Sigmoid colon (tissue), 7 donors: ENCODE measurements at regions of chr17 and their contacts with region 1.

Region 1: GRCh38 chr17:2688351-2689342 is 22.9 kb downstream of the CLUH start:
- DNase-seq: peak; percentile 72
- H3K4me3 ChIP-seq: no peak overlapping the region
- H3K27ac ChIP-seq: peak overlapping the region; percentile 36 to 72 (median 66)
- H3K4me1 ChIP-seq: peaks cover 0 to 51% (median 40%) of the 10 kb centered on the region in 4 donors
- H3K27me3 ChIP-seq: no peaks in the 10 kb centered on the region
- CTCF ChIP-seq: no peak
- EP300 ChIP-seq: no peak
- POLR2A ChIP-seq: no peak

Region 2: DNA sequence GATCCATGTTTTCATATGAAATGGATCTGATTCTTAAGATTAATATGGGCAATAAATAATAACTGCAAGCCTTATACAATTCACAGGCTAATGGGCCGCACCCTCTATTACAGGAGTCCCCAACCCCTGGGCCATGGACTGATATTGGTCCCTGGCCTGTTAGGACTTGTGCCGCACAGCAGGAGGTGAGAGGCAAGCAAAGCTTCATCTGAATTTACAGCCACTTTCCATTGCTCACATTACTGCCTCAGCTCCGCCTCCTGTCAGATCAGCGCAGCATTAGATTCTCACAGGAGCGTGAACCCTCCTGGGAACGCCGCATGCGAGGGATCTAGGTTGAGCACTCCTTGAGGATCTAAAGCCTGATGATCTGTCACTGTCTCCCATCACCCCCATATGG is 203.8 kb before region 1 on chr17:
- intact Hi-C with region 1: loop called (anchors 10 kb)
- DNase-seq: no peak
- H3K4me3 ChIP-seq: no peak overlapping the region
- H3K27ac ChIP-seq: no peak overlapping the region
- H3K4me1 ChIP-seq: peaks cover 0 to 40% (median 32%) of the 10 kb centered on the region in 4 donors
- H3K27me3 ChIP-seq: no peaks in the 10 kb centered on the region
- CTCF ChIP-seq: no peak
- EP300 ChIP-seq: no peak
- POLR2A ChIP-seq: no peak

Region 3: GRCh38 chr17:2602597-2603017 is 86.0 kb before region 1 on chr17:
- intact Hi-C with region 1: no loop called
- DNase-seq: no peak
- H3K4me3 ChIP-seq: no peak overlapping the region
- H3K27ac ChIP-seq: peak overlapping the region in 1 of 4 donors; percentile 24
- H3K4me1 ChIP-seq: peaks cover 0 to 84% (median 69%) of the 10 kb centered on the region in 4 donors
- H3K27me3 ChIP-seq: no peaks in the 10 kb centered on the region
- CTCF ChIP-seq: no peak
- EP300 ChIP-seq: no peak
- POLR2A ChIP-seq: no peak

Region 4: DNA sequence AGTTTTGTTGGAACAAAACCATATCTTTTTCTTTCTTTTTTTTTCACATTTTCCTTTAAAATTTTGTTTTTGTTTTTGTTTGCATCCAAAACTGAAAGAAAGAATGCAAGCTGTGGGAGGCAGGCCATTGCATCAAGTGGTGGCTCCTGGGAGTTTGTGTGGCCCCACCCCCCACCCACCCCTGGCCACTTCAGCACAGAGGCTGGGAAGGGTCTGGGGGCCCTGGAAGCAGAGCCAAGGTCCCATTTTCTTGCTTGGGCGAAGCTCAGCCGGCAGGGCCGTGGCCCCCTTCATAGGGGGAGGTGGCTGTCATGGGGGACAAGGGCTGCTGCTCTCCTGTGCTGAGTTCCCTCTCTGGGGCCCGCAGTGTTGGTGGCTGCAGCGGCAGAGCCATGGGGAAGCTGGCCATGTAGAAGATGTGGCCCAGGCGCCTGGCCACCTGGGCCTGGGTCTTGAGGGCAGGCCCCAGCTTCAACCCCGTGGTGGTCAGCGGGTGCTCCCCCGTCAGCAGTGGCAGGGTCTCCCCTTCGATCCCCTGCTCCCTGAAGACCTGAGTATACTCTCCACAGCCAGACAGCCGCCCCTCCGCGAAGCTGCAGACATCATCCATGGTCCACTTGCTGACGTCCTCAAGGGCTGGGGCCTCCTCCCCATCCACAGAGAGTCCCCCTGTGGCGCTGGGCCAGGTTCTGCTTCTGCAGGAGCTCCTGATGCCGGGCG is 75.4 kb before region 1 on chr17:
- intact Hi-C with region 1: no loop called
- DNase-seq: no peak
- H3K4me3 ChIP-seq: no peak overlapping the region
- H3K27ac ChIP-seq: no peak overlapping the region
- H3K4me1 ChIP-seq: peaks cover 0 to 79% (median 53%) of the 10 kb centered on the region in 4 donors
- H3K27me3 ChIP-seq: no peaks in the 10 kb centered on the region
- CTCF ChIP-seq: no peak
- EP300 ChIP-seq: no peak
- POLR2A ChIP-seq: no peak